Activated naive CD4-positive, alpha-beta T cell treated with anti-CD3 and anti-CD28 coated beads for 36 hours (primary cell): ENCODE measurements at regions of chr4 and their contacts with region 1.

Region 1: DNA sequence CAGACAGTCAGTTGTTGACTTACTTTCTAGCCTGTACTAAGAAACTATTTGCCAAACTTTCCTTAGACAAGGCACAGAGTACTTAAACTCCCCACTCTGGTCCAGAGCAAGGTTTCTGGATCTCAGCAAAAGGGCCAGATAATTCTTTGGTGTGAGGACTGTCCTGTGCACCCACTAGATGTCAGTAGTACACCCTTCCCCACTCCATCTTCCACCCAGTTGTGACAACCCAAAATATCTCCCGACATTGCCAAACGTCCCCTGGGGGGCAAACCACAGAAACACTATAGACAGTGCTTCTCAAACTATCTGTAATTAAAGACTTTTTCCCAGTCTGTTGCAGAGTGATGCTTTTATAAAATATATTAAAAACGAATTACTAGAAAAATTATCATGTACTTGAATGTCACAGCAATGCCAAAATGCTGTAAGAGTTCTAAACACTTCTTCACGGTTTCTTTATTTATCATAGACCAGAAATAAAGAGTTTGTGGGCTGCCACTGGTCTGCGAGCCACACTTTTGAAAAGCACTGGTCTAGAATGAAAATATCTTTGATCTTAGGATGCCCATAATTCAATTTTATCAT is 203.5 kb downstream of the PRDM5 start:
- DNase-seq: peak; percentile 37
- H3K4me3 Mint-ChIP-seq: no peak overlapping the region
- H3K27ac Mint-ChIP-seq: no peak overlapping the region
- H3K4me1 Mint-ChIP-seq: no peaks in the 10 kb centered on the region
- H3K27me3 Mint-ChIP-seq: peaks cover 2% of the 10 kb centered on the region

Region 2: GRCh38 chr4:120922381-120923206 is 203.5 kb after region 1 on chr4 and contains the start of gene PRDM5:
- CTCF ChIA-PET with region 1: interaction called, 6 read pairs
- intact Hi-C with region 1: loop called (anchors 5 kb)
- DNase-seq: peak; percentile 40
- H3K4me3 Mint-ChIP-seq: peak within 1 kb of the TSS; percentile 73
- H3K27ac Mint-ChIP-seq: peak within 1 kb of the TSS; percentile 54
- H3K4me1 Mint-ChIP-seq: peaks cover 13% of the 10 kb centered on the region
- H3K27me3 Mint-ChIP-seq: peaks cover 4% of the 10 kb centered on the region
- total RNA-seq, gene PRDM5: 0.20 to 0.57 TPM

Region 3: GRCh38 chr4:121050300-121050699 is 331.2 kb after region 1 on chr4:
- CTCF ChIA-PET with region 1: no interaction called
- intact Hi-C with region 1: loop called (anchors 1 kb)
- DNase-seq: no peak
- H3K4me3 Mint-ChIP-seq: no peak overlapping the region
- H3K27ac Mint-ChIP-seq: no peak overlapping the region
- H3K4me1 Mint-ChIP-seq: peaks cover 2% of the 10 kb centered on the region
- H3K27me3 Mint-ChIP-seq: no peaks in the 10 kb centered on the region

Region 4: GRCh38 chr4:121112530-121112929 is 393.5 kb after region 1 on chr4:
- CTCF ChIA-PET with region 1: no interaction called
- intact Hi-C with region 1: loop called (anchors 5 kb)
- DNase-seq: no peak
- H3K4me3 Mint-ChIP-seq: no peak overlapping the region
- H3K27ac Mint-ChIP-seq: no peak overlapping the region
- H3K4me1 Mint-ChIP-seq: peaks cover 22% of the 10 kb centered on the region
- H3K27me3 Mint-ChIP-seq: no peaks in the 10 kb centered on the region